PC-3 (cell line): ENCODE measurements at regions of chr10 and their contacts with region 1.

Region 1: DNA sequence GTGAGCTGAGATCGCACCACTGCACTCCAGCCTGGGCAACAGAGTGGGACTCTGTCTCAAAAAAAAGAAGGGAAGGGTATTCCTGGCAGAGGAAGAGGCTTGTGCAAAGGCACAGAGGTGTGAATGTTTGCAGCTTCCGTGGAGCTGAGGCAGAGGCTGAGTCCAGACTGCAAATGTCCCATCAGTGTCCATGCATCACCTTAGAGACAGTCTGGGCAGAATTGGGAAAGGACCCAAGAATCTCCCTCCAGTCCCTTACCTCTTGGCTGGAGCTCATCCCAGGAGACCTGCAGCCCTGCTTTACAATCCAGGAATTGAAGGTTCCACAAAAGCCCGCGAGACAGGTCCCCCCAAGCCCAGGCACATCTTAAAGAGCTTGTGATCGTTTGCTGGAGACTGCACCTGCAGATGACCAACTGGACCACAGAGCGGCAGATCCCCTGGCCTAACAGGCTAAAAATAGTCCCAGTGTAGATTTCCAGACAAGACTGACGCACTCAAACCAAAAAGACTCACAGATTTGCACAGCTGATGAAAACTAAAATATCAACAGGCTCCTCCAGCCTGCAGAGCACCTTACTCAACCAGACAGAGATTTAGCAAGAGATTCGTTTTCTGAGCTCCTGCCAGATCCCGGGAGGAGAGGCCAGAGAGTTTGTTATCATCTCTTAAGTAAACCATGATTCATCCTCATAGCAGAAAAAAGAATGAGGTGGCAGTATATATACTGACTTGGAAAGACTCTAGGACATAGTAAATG is 22.9 kb upstream of the NANOS1 start:
- DNase-seq: peak; percentile 98
- ATAC-seq: peak; percentile 86
- H3K4me3 ChIP-seq: no peak overlapping the region; the same call in 1 of the 2 replicates
- H3K27ac ChIP-seq: peak overlapping the region; percentile 74
- H3K4me1 ChIP-seq: peaks cover 27% of the 10 kb centered on the region
- H3K27me3 ChIP-seq: no peaks in the 10 kb centered on the region
- CTCF ChIP-seq: no peak

Region 2: GRCh38 chr10:118950190-118950680 is 56.4 kb before region 1 on chr10:
- CTCF ChIA-PET with region 1: no interaction called
- POLR2A ChIA-PET with region 1: no interaction called
- intact Hi-C with region 1: loop called (anchors 5 kb)
- DNase-seq: peak; percentile 75
- ATAC-seq: peak; percentile 99
- H3K4me3 ChIP-seq: no peak overlapping the region
- H3K27ac ChIP-seq: peak overlapping the region; percentile 16; the same call in 1 of the 2 replicates
- H3K4me1 ChIP-seq: peaks cover 16% of the 10 kb centered on the region
- H3K27me3 ChIP-seq: no peaks in the 10 kb centered on the region
- CTCF ChIP-seq: no peak

Region 3: DNA sequence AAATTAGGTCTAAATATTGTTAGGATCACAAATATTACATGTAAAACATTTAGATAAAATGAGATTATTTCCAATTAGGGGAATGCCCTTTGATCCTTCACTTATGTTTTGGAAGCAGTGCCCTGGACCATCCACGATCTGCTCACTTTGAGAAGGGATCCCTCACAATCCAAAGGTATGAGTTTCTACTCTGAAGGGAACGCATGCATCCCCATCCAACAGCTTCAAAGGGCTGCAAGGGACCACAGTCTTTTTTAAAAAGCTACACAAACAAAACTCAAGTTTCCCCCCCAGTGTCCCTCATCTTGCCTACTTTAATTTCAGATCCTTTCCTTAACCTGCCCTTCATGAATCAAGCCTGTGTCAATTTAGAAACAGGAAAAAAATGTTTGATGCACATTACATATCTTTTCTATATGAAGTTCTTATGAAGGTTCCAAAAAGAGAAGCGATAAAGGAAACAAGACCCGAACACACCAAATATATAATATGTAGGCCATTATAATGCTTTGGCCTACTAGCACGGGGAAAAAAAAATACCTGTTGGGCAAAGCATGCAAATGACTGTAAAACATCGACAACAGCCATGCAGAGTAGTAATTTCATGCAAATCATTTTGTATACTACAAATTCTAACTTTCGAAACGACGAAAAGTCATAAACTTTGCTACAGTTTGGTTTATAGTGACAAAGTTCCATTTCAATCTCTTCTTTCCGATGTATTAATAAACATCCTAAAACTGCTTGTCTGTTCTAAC is 72.0 kb after region 1 on chr10:
- CTCF ChIA-PET with region 1: no interaction called
- POLR2A ChIA-PET with region 1: no interaction called
- intact Hi-C with region 1: no loop called
- DNase-seq: no peak
- ATAC-seq: no peak
- H3K4me3 ChIP-seq: peak overlapping the region; percentile 100
- H3K27ac ChIP-seq: no peak overlapping the region
- H3K4me1 ChIP-seq: peaks cover 11% of the 10 kb centered on the region
- H3K27me3 ChIP-seq: no peaks in the 10 kb centered on the region
- CTCF ChIP-seq: no peak